ENCODE measurements at regions of chr6 and their contacts with region 1.

Region 1: DNA sequence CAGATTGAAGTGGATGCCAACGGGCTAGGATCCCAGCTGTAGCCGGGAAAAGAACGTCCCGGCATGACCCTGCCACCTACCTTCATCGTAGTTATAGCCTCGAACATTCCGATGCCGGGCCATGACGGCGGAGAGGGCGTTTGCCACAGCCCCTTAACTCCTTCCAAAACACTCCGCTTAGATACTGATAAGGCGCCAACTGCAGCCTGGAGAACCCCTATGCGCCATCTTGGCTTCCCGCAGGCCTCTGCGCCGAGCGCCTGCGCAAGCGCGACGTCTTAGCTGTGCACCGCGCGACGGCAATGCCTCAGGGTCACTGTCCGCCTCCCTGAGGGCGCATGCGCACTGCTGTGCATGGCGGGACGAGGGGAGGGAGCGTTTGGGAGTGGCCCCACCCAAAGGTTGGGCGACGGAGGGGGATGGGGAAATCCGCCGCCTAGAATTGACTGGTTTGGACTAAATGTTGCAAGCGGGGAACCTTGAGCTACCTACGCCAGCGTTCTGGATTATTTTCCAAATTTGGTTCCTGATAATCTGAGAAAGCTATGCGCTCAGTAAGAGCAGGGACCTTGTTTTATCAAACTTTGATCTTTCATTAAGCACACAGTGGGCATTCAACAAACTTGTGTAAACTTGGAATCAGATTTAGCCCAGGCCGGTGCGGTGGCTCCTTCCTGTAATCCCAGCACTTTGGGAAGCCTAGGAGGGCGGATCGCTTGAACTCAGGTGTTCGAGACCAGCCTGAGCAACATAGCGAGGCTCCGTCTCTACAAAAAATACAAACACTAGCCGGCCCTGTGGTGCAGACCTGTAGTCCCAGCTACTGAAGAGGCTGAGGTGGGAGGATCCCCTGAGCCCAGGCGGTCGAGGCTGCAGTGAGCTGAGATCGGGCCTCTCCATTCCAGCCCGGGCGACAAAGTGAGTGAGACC is at the start of gene HBS1L:
- DNase-seq: peak; percentile 100

Region 2: DNA sequence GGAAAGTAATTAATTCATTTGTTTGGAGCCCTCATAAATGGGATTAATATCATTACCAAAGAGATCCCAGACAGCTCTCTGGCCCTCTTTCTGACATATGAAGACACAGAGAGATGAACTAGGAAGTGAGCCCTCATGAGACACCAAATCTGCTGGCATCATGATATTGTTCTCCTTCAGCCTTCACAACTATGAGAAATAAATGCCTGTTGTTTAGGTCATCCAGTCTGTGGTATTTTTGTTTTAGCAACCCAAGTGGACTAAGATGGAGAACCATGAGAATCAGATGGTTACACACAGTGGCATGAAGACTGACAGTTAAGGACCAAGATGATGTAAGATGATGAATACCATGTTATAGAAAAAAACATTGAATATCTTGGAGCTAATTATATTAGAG is 16.7 kb after region 1 on chr6:
- CTCF ChIA-PET with region 1: no interaction called
- POLR2A ChIA-PET with region 1: no interaction called
- DNase-seq: no peak

Region 3: DNA sequence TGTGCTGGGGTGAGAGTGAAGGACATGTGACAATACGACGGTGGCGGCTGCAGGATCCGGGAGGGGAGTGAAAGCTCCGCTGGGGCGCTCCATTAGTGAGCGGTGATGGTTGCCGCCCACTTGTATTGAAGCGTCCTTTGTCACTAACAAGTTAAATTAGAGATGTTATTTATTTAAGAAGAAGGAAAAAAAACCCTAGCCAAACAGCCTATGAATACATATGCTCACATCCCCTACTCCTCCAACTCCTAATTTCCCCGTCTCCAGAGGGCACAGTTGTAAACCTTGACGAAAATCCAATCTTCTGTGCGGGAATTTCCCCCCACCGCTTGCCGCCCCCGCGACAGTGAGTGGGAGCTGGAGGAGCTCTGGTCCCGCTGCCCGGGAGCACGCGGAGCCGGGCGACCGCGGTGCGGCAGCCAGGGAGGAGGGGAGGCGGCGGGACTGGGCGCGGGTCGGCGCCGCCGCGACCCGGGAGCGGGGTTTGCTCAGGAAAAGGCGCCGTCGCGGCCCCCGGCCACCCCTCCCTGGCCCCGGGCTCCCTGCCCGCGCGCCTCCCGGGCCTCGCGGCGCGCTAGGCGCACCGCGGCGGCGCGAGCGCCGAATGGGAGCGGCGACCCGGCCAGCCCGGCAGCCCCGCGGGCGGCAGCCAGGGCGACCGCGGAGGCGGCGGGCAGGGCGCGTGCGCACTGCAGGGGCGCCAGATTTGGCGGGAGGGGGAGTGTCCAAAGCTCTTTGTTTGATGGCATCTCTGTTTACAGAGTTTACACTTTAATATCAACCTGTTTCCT is 125.9 kb after region 1 on chr6 and contains the start of gene MYB:
- CTCF ChIA-PET with region 1: no interaction called
- POLR2A ChIA-PET with region 1: interaction called, 12 read pairs
- DNase-seq: peak; percentile 92